ENCODE measurements at regions of chr3 and their contacts with region 1.

Region 1: DNA sequence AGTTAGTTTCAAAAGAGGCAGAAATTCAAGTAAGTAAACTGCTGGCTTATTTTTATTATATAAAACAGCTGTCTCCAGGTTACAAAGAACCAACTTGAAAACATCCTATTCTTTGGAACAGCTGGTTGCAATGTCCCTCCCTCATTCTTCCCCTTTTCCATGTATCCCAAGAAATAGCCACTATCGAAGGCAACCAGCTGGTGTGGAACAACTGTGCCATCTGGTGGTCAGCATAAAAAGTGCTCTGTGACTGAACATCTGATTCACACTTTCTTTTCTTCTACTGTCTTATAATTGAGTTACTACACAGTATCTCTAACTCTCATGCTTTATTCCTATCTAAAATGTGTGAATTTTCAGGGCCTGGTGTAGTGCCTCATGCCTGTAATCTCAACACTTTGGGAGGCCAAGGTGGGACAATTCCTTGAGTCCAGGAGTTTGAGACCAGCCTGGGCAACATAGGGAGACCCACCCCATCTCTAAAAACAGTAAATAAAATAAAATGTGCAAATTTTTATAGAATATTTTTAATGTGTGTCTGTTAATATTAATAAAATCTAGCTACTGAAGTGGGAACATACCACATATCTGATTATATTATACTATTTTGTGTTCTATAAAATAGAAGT is 9.6 kb downstream of the OSBPL11 start:
- DNase-seq: peak; percentile 15
- H3K4me3 ChIP-seq: no peak overlapping the region
- H3K27me3 ChIP-seq: no peaks in the 10 kb centered on the region
- CTCF ChIP-seq: peak; percentile 86

Region 2: GRCh38 chr3:124928333-124929202 is 657.1 kb before region 1 on chr3:
- CTCF ChIA-PET with region 1: interaction called, 24 read pairs
- POLR2A ChIA-PET with region 1: no interaction called
- DNase-seq: no peak
- H3K4me3 ChIP-seq: no peak overlapping the region
- H3K27me3 ChIP-seq: no peaks in the 10 kb centered on the region
- CTCF ChIP-seq: peak; percentile 76

Region 3: DNA sequence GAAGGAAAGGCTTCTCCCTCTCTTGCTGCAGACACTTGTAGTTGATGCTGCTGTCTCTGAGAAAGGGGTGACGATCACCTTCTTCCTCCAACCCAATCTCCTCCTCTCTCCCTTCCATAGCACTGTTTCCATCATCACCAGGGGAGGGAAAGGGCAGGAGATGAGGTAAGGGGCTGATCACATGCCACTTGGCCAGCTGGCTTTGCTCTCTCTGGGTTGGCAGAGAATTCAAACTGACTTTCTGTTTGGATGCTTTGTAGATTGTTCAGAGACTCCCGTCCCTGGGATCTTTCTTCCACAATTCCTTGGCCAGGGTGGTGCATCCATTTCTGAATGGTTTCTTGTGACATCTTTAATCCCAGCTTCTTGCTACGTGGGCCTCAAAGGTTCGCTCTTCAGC is 167.4 kb before region 1 on chr3:
- CTCF ChIA-PET with region 1: no interaction called
- POLR2A ChIA-PET with region 1: no interaction called
- DNase-seq: no peak
- H3K4me3 ChIP-seq: no peak overlapping the region
- H3K27me3 ChIP-seq: no peaks in the 10 kb centered on the region
- CTCF ChIP-seq: no peak

Region 4: GRCh38 chr3:125644036-125645010 is 58.6 kb after region 1 on chr3:
- CTCF ChIA-PET with region 1: no interaction called
- POLR2A ChIA-PET with region 1: no interaction called
- DNase-seq: no peak
- H3K4me3 ChIP-seq: no peak overlapping the region
- H3K27me3 ChIP-seq: peaks cover 3% of the 10 kb centered on the region
- CTCF ChIP-seq: no peak